Lower lobe of right lung (tissue), 2 donors: ENCODE measurements at regions of chr13 and their contacts with region 1.

Region 1: DNA sequence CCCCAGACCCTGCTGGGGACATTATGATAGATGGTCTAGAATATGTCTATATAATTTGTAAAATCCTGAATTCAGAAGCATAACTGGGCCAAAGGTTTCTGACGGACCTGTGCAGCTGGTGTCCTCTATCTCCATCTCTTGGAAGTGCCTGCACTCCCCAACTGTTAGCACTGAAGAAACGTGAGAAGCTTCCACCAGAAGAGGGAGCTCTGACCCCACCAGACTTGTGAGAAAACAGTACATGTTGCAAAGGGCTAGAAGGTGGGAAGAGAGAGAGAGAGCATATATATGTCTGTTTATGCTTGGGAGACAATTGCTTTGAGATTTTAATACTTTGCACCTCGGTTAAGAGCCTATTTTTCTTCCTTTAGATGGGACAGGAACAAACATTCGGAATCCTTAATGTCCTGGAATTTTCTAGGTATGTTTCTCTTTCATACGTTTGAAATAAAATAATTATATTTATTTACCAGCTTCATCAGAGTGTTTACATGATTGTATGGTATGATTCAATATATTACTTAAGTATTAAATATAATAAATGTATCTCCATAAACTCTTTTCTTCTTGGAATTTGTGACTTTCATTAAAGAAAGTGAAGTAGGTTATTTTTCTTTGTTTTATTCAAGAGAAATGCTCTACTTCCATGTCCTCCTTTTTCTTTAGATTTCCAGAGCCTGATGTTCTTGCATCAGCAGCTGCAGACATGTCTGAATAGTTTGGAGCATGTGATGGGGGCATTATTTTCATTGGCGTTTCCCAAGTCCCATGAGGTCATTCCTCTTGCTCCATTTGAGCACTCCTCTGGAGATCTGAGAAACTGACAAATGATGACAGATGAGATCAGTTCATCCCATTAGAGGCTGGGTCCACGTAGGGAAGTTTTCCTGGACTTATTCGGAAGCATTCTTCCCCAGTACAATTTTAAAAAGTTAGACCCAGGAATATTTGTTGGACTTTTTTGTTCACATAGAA is 202.9 kb downstream of the ATP8A2 start:
- DNase-seq: peak; percentile 51
- ATAC-seq: peak; percentile 84 to 85
- H3K4me3 ChIP-seq: no peak overlapping the region
- H3K27ac ChIP-seq: no peak overlapping the region
- H3K4me1 ChIP-seq: no peaks in the 10 kb centered on the region
- H3K27me3 ChIP-seq: no peaks in the 10 kb centered on the region
- CTCF ChIP-seq: peak; percentile 73

Region 2: DNA sequence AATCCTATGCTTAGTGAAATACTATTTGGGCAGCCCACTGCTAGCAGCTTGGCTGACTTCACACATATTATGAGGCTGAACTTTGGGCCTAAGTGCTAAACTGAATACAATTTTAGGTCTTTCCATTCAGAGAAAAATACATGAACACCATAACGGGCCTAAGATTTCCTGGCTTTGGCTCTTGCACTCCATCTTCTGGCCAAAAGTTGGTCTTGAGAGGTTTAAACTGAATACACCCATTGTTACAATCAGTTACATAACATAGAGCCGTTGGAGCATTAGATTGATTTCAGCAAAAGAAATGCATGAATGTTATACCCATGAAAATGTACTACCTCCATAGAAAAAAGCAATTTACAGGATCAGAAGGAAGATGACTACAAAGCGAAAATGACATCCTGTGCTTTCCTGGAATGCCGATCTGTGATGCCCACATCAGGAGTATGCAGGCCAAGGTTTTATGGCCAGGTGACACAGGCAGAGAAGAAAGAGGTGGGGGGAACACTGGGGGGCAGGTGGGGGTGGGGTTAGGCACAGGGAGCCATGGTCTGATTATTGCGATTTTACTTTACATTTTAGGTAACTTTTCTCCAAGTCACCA is 488.2 kb after region 1 on chr13:
- intact Hi-C with region 1: loop called (anchors 5 kb)
- DNase-seq: no peak
- ATAC-seq: peak; percentile 72 to 77
- H3K4me3 ChIP-seq: no peak overlapping the region
- H3K27ac ChIP-seq: no peak overlapping the region
- H3K4me1 ChIP-seq: no peaks in the 10 kb centered on the region
- H3K27me3 ChIP-seq: no peaks in the 10 kb centered on the region
- CTCF ChIP-seq: peak; percentile 57